Activated CD4-positive, alpha-beta T cell treated with anti-CD3 and anti-CD28 coated beads for 36 hours (primary cell): ENCODE measurements at regions of chr10 and their contacts with region 1.

Region 1: GRCh38 chr10:100912605-100913469 is at the start of gene SLF2:
- DNase-seq: peak; percentile 96
- ATAC-seq: peak; percentile 95
- H3K4me3 Mint-ChIP-seq: peak within 1 kb of the TSS; percentile 97
- H3K27ac Mint-ChIP-seq: peak within 1 kb of the TSS; percentile 98
- H3K4me1 Mint-ChIP-seq: peaks cover 45% of the 10 kb centered on the region
- H3K27me3 Mint-ChIP-seq: no peaks in the 10 kb centered on the region
- total RNA-seq, gene SLF2: 30.9 to 34.3 TPM

Region 2: GRCh38 chr10:100267237-100268104 is 645.4 kb before region 1 on chr10 and contains the start of gene CWF19L1:
- CTCF ChIA-PET with region 1: no interaction called
- POLR2A ChIA-PET with region 1: no interaction called
- intact Hi-C with region 1: loop called in 1 of 2 experiments (anchors 5 kb)
- DNase-seq: peak; percentile 86
- ATAC-seq: peak; percentile 92
- H3K4me3 Mint-ChIP-seq: peak within 1 kb of the TSS; percentile 97
- H3K27ac Mint-ChIP-seq: peak within 1 kb of the TSS; percentile 99
- H3K4me1 Mint-ChIP-seq: peaks cover 22% of the 10 kb centered on the region
- H3K27me3 Mint-ChIP-seq: no peaks in the 10 kb centered on the region
- total RNA-seq, gene CWF19L1: 43.4 to 47.5 TPM

Region 3: DNA sequence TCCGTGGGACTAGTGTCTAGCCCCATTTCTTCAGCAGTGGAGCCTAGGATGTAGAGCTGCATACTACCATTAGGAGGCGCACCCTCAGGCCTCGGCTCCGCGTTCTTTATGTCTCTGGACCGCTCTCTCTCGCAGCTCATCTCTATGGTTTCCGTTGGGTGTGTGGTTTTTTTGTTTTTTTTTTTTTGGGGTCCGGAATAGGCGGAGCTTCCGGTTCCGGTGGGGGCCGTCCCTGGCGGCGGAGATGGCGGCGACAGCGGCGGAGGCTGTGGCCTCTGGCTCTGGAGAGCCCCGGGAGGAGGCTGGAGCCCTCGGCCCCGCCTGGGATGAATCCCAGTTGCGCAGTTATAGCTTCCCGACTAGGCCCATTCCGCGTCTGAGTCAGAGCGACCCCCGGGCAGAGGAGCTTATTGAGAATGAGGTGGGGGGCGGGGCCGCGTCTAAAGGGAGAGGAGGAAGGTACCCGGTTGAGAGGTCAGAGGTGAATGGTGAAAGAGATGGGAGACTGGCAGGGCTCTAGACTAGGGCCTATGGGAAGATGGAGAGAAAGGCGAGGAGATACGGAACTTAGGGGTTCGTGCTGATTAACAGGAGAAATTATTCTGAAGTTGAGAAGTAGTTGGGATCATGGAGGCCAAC is 377.0 kb before region 1 on chr10 and contains the start of gene HIF1AN:
- CTCF ChIA-PET with region 1: interaction called, 3 read pairs
- POLR2A ChIA-PET with region 1: no interaction called
- intact Hi-C with region 1: loop called in 1 of 2 experiments (anchors 1 kb)
- DNase-seq: peak; percentile 93
- ATAC-seq: peak; percentile 96
- H3K4me3 Mint-ChIP-seq: no peak within 1 kb of the TSS
- H3K27ac Mint-ChIP-seq: no peak within 1 kb of the TSS
- H3K4me1 Mint-ChIP-seq: peaks cover 27% of the 10 kb centered on the region
- H3K27me3 Mint-ChIP-seq: no peaks in the 10 kb centered on the region
- total RNA-seq, gene HIF1AN: 45.9 to 50.8 TPM

Region 4: GRCh38 chr10:100986952-100987750 is 74.3 kb after region 1 on chr10 and contains the starts of genes MRPL43 and TWNK:
- CTCF ChIA-PET with region 1: interaction called, 3 read pairs
- POLR2A ChIA-PET with region 1: interaction called, 3 read pairs
- intact Hi-C with region 1: loop called (anchors 1 kb)
- DNase-seq: peak; percentile 93
- ATAC-seq: peak; percentile 98
- H3K4me3 Mint-ChIP-seq: peak within 1 kb of the TSS; percentile 100
- H3K27ac Mint-ChIP-seq: peak within 1 kb of the TSS; percentile 94
- H3K4me1 Mint-ChIP-seq: peaks cover 43% of the 10 kb centered on the region
- H3K27me3 Mint-ChIP-seq: no peaks in the 10 kb centered on the region
- total RNA-seq, gene MRPL43: 53.4 to 62.6 TPM
- total RNA-seq, gene TWNK: 13.8 to 17.9 TPM

Region 5: GRCh38 chr10:101060036-101060950 is 147.5 kb after region 1 on chr10:
- CTCF ChIA-PET with region 1: no interaction called
- POLR2A ChIA-PET with region 1: no interaction called
- intact Hi-C with region 1: loop called in 1 of 2 experiments (anchors 1 kb)
- DNase-seq: peak; percentile 95
- ATAC-seq: peak; percentile 75
- H3K4me3 Mint-ChIP-seq: peak overlapping the region; percentile 82
- H3K27ac Mint-ChIP-seq: peak overlapping the region; percentile 96
- H3K4me1 Mint-ChIP-seq: peaks cover 22% of the 10 kb centered on the region
- H3K27me3 Mint-ChIP-seq: peaks cover 22% of the 10 kb centered on the region